PC-3 (cell line): ENCODE measurements at regions of chr5 and their contacts with region 1.

Region 1: DNA sequence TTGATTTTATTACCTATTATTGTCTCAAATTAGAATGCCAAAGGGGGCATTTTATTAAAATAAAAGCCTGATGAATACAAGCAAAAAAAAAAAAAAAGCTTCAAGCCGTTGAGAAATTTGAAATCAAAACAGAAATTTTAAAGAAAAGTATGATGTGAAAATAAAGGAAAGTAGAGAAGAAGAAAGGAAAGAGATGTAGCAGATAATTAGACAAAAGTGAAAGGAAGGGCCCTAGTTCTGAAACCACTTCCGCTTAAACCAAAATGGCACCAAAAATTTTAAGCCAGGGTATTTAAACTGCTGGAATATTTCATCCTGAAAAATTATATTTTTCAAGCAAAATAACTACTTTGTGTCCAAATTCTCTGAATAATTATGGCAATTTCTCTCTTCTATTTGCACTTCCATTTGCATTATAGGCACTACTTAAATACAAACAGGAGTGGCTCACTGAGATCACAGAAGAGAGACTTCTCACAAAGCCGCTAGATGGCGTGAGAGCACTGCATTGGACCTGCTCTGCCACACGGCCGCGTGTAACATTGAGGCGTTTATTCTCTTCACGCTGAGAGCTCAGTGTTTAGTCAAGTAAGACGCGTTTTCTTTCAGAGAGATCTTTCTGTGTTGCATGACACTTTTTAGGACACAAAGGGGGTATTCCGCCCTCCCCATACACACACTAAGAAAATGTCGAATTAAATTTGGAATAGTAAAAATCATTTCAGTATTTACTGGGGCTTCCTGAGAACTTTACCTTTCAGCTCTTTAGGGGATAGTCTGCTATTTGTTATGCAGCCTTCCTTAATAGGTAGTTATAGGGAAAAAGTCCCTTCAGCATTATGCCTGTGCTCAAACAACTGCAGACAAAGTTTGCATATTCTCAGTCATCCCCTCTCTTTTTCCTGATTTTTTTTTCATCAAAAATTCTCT is 368.4 kb upstream of the CCNH start:
- DNase-seq: peak; percentile 93
- ATAC-seq: peak; percentile 100
- H3K4me3 ChIP-seq: peak overlapping the region; percentile 38; the same call in 1 of the 2 replicates
- H3K27ac ChIP-seq: no peak overlapping the region
- H3K4me1 ChIP-seq: 0 out of 2 replicates have a peak, but pooled peaks cover 4% of the 10 kb centered on the region
- H3K27me3 ChIP-seq: no peaks in the 10 kb centered on the region
- CTCF ChIP-seq: peak; percentile 97

Region 2: DNA sequence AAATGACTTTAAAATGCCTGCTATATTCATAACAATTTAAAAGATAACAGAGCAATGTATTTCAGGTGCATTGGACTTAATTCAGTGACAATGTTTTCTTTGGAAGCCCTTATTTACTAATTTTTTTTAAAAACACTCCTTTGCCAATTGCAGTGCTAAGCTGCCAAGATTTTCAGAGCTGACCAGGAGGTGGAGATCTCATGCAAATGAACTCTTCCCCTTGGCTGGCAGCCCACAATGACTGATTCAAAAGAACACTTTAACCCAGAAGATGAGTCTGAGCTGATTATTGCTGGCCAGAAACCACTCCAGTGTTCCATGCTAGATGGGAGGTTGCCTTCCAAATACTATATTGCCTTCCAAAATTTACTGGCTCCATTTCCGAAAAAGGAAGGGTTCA is 240.1 kb before region 1 on chr5:
- CTCF ChIA-PET with region 1: interaction called, 7 read pairs
- POLR2A ChIA-PET with region 1: no interaction called
- intact Hi-C with region 1: loop called (anchors 1 kb)
- DNase-seq: peak; percentile 90
- ATAC-seq: peak; percentile 95
- H3K4me3 ChIP-seq: no peak overlapping the region
- H3K27ac ChIP-seq: no peak overlapping the region
- H3K4me1 ChIP-seq: peaks cover 6% of the 10 kb centered on the region; the same call in 1 of the 2 replicates
- H3K27me3 ChIP-seq: peaks cover 4% of the 10 kb centered on the region; the same call in 1 of the 2 replicates
- CTCF ChIP-seq: peak; percentile 57

Region 3: GRCh38 chr5:87867281-87867680 is 86.2 kb after region 1 on chr5:
- CTCF ChIA-PET with region 1: no interaction called
- POLR2A ChIA-PET with region 1: no interaction called
- intact Hi-C with region 1: no loop called
- DNase-seq: no peak
- ATAC-seq: no peak
- H3K4me3 ChIP-seq: no peak overlapping the region
- H3K27ac ChIP-seq: no peak overlapping the region
- H3K4me1 ChIP-seq: no peaks in the 10 kb centered on the region
- H3K27me3 ChIP-seq: no peaks in the 10 kb centered on the region
- CTCF ChIP-seq: no peak

Region 4: DNA sequence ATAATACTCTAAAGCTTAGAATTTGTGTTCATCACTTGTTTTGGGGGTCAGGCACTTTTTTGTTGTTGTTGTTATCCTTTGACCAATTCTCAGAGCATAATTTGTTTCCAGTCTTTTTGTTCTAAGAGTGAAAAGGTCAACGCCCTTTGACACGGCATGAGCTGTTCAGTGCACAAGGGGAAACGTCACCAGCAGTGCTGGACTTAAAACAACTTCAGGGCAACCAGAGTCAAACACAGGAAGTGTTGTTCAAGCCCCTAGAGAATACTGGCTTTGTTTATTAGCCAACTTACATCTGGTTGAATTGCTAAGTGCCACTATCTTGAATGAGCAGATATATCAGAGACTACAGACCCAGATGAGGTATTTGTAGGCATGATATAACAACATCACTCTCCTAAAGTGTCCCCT is 118.6 kb after region 1 on chr5:
- CTCF ChIA-PET with region 1: interaction called, 5 read pairs
- POLR2A ChIA-PET with region 1: no interaction called
- intact Hi-C with region 1: loop called (anchors 5 kb)
- DNase-seq: no peak
- ATAC-seq: no peak
- H3K4me3 ChIP-seq: no peak overlapping the region
- H3K27ac ChIP-seq: no peak overlapping the region
- H3K4me1 ChIP-seq: peaks cover 7% of the 10 kb centered on the region; the same call in 1 of the 2 replicates
- H3K27me3 ChIP-seq: no peaks in the 10 kb centered on the region
- CTCF ChIP-seq: no peak

Region 5: DNA sequence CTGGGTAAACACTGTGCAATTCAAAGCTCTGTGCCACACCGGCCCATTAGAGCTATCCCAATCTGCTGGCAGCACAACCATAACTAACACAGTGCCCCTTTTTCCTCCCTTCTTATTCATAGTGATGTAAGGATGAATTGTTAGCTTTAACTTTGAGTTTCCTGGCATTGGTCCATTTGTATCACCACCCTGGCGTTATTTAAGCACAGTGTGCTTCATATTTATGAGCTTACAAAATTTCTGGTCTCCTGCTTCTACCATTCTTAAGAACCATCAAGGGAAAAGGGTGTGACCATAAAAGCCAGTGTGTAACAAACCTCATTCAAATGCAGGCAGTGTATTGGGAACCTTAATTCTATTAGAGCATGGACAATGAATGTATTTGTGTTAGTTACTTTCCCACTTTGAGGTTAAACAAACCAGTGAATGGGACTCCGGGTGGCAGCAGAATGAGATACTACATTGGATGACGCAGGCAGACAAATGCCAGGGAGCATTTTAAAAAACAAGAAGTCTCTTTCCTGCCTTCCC is 264.9 kb after region 1 on chr5:
- CTCF ChIA-PET with region 1: interaction called, 12 read pairs
- POLR2A ChIA-PET with region 1: no interaction called
- intact Hi-C with region 1: no loop called
- DNase-seq: peak; percentile 67
- ATAC-seq: peak; percentile 90
- H3K4me3 ChIP-seq: no peak overlapping the region
- H3K27ac ChIP-seq: no peak overlapping the region
- H3K4me1 ChIP-seq: peaks cover 9% of the 10 kb centered on the region; the same call in 1 of the 2 replicates
- H3K27me3 ChIP-seq: no peaks in the 10 kb centered on the region
- CTCF ChIP-seq: no peak

Region 6: GRCh38 chr5:88140856-88141752 is 360.0 kb after region 1 on chr5:
- CTCF ChIA-PET with region 1: interaction called, 3 read pairs
- POLR2A ChIA-PET with region 1: no interaction called
- intact Hi-C with region 1: loop called (anchors 1 kb)
- DNase-seq: peak; percentile 97
- ATAC-seq: peak; percentile 92
- H3K4me3 ChIP-seq: peak overlapping the region; percentile 82
- H3K27ac ChIP-seq: no peak overlapping the region
- H3K4me1 ChIP-seq: peaks cover 13% of the 10 kb centered on the region; the same call in 1 of the 2 replicates
- H3K27me3 ChIP-seq: no peaks in the 10 kb centered on the region
- CTCF ChIP-seq: peak; percentile 49

Region 7: GRCh38 chr5:88690409-88691229 is 909.5 kb after region 1 on chr5:
- CTCF ChIA-PET with region 1: interaction called, 13 read pairs
- POLR2A ChIA-PET with region 1: no interaction called
- intact Hi-C with region 1: loop called (anchors 2 kb)
- DNase-seq: peak; percentile 66
- ATAC-seq: peak; percentile 75
- H3K4me3 ChIP-seq: peak overlapping the region; percentile 70
- H3K27ac ChIP-seq: no peak overlapping the region
- H3K4me1 ChIP-seq: peaks cover 16% of the 10 kb centered on the region; the same call in 1 of the 2 replicates
- H3K27me3 ChIP-seq: peaks cover 41% of the 10 kb centered on the region
- CTCF ChIP-seq: peak; percentile 97

Region 8: GRCh38 chr5:89729623-89730301 is 1948.7 kb after region 1 on chr5:
- CTCF ChIA-PET with region 1: interaction called, 3 read pairs
- POLR2A ChIA-PET with region 1: interaction called, 8 read pairs
- intact Hi-C with region 1: loop called (anchors 1 kb)
- DNase-seq: peak; percentile 73
- ATAC-seq: peak; percentile 88
- H3K4me3 ChIP-seq: no peak overlapping the region
- H3K27ac ChIP-seq: no peak overlapping the region
- H3K4me1 ChIP-seq: 0 out of 2 replicates have a peak, but pooled peaks cover 4% of the 10 kb centered on the region
- H3K27me3 ChIP-seq: no peaks in the 10 kb centered on the region
- CTCF ChIP-seq: peak; percentile 80